Activated naive CD4-positive, alpha-beta T cell treated with anti-CD3 and anti-CD28 coated beads for 36 hours (primary cell): ENCODE measurements at regions of chr10 and their contacts with region 1.

Region 1: DNA sequence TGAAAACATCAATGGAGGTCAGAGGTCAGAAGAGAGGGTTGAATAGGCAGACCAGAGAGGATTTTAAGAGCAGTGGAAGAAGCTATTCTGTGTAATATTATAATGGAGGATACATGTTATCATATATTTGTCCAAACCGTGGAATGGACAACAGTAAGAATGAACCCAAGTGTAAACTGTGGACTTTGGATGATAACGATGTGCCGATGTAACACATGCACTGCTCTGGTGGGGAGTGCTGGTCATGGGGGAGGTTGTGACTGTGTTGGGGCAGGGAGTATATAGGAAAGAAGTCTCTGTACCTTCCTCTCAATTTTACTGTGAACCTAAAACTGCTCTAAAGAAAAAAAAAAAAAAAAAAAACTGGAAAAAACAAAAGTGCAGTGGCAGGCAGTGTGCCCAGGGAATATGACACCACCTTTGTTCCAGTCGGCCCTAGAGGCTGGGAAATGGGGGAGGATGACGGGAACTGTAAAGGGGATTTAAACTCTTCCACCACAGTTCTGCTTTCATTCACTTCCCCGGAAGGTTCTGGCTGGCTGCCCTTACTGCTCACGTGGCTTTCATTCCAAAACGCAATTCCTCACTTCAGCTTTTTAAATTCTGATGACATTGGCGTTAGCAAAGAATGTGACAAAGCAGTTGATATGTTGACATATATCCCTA is 113.7 kb upstream of the ANKRD1 start:
- DNase-seq: no peak
- H3K4me3 Mint-ChIP-seq: no peak overlapping the region
- H3K27ac Mint-ChIP-seq: peak overlapping the region; percentile 57
- H3K4me1 Mint-ChIP-seq: peaks cover 15% of the 10 kb centered on the region
- H3K27me3 Mint-ChIP-seq: no peaks in the 10 kb centered on the region

Region 2: DNA sequence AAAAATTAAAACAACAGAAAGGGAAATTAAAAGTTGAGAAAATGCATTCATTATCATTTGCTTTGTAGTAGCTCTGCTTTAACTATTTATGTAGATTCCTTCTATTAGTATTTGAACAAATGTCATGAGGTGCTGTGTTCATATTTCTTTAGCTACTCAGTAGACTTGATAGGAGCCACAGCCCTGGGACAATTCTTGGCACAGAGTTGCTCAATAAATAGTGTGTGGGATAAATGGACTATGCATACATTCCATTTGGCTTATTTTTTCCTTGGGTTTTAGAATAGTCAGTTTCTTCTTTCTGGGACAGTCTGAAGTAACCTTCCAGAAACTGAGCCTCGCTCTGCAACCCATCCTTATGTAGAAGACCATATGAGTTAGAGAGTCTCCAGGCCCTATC is 149.5 kb before region 1 on chr10:
- CTCF ChIA-PET with region 1: no interaction called
- intact Hi-C with region 1: loop called (anchors 1 kb)
- DNase-seq: no peak
- H3K4me3 Mint-ChIP-seq: no peak overlapping the region
- H3K27ac Mint-ChIP-seq: no peak overlapping the region
- H3K4me1 Mint-ChIP-seq: peaks cover 2% of the 10 kb centered on the region
- H3K27me3 Mint-ChIP-seq: no peaks in the 10 kb centered on the region

Region 3: GRCh38 chr10:91049988-91050360 is 15.3 kb after region 1 on chr10:
- CTCF ChIA-PET with region 1: no interaction called
- intact Hi-C with region 1: loop called (anchors 1 kb)
- DNase-seq: no peak
- H3K4me3 Mint-ChIP-seq: no peak overlapping the region
- H3K27ac Mint-ChIP-seq: no peak overlapping the region
- H3K4me1 Mint-ChIP-seq: no peaks in the 10 kb centered on the region
- H3K27me3 Mint-ChIP-seq: peaks cover 4% of the 10 kb centered on the region

Region 4: GRCh38 chr10:91816981-91817380 is 782.4 kb after region 1 on chr10:
- CTCF ChIA-PET with region 1: no interaction called
- intact Hi-C with region 1: no loop called
- DNase-seq: no peak
- H3K4me3 Mint-ChIP-seq: no peak overlapping the region
- H3K27ac Mint-ChIP-seq: no peak overlapping the region
- H3K4me1 Mint-ChIP-seq: peaks cover 9% of the 10 kb centered on the region
- H3K27me3 Mint-ChIP-seq: no peaks in the 10 kb centered on the region